Caco-2 (cell line): ENCODE measurements at regions of chr13 and their contacts with region 1.

Region 1: DNA sequence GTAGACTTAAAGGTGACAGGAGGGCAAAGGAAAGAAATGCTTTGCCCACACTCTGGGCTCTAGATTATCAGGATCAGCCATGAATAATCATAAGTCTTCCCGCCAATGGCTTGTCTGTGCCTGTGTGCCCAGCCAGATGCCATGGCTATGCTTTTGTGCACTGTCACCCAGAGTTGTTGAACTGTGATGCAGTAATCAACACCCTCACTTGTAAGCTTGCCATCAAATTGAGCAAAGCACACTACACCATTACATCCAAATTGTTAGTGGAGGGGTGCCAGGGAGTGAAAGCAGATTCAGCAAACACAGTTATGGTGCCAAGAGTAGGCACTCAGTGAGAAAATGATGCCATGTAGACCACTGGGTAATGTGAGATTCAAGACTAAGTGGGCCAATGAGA is 845.3 kb upstream of the MIR17HG start:
- DNase-seq: no peak
- H3K4me3 ChIP-seq: no peak overlapping the region
- H3K4me3 Mint-ChIP-seq: no peak overlapping the region
- H3K27ac Mint-ChIP-seq: peak overlapping the region; percentile 73
- H3K4me1 ChIP-seq: peaks cover 65% of the 10 kb centered on the region
- H3K4me1 Mint-ChIP-seq: peaks cover 50% of the 10 kb centered on the region
- H3K27me3 ChIP-seq: no peaks in the 10 kb centered on the region
- H3K27me3 Mint-ChIP-seq: no peaks in the 10 kb centered on the region
- CTCF ChIP-seq: no peak

Region 2: GRCh38 chr13:90445179-90445578 is 57.0 kb before region 1 on chr13:
- CTCF ChIA-PET with region 1: no interaction called
- POLR2A ChIA-PET with region 1: no interaction called
- intact Hi-C with region 1: loop called (anchors 2 kb)
- DNase-seq: peak; percentile 53 to 55
- H3K4me3 ChIP-seq: no peak overlapping the region
- H3K4me3 Mint-ChIP-seq: no peak overlapping the region
- H3K27ac Mint-ChIP-seq: peak overlapping the region; percentile 85
- H3K4me1 ChIP-seq: peaks cover 38% of the 10 kb centered on the region
- H3K4me1 Mint-ChIP-seq: peaks cover 23% of the 10 kb centered on the region
- H3K27me3 ChIP-seq: no peaks in the 10 kb centered on the region
- H3K27me3 Mint-ChIP-seq: no peaks in the 10 kb centered on the region
- CTCF ChIP-seq: no peak

Region 3: DNA sequence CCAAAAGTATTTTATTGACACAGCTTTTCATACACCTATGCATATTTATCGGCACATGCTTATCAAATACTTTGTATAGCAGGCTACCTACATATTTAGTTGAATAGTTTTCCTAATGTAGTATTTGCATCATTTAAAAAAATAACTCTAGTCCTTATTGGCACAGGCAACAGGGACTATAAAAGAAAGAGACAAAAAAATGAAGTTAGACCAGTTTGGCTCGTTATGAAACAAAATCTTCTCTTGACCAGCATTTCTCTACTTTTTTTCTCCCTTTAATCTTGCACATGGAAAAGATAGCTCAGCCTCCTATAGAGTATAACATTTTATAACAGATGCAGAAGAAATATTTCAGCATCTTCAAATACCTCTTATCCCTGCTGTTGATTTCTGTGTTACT is 50.5 kb after region 1 on chr13:
- CTCF ChIA-PET with region 1: no interaction called
- POLR2A ChIA-PET with region 1: no interaction called
- intact Hi-C with region 1: loop called (anchors 2 kb)
- DNase-seq: peak in 1 of 2 experiments; percentile 19
- H3K4me3 ChIP-seq: no peak overlapping the region
- H3K4me3 Mint-ChIP-seq: peak overlapping the region; percentile 13
- H3K27ac Mint-ChIP-seq: no peak overlapping the region
- H3K4me1 ChIP-seq: 0 out of 2 replicates have a peak, but pooled peaks cover 5% of the 10 kb centered on the region
- H3K4me1 Mint-ChIP-seq: peaks cover 14% of the 10 kb centered on the region
- H3K27me3 ChIP-seq: no peaks in the 10 kb centered on the region
- H3K27me3 Mint-ChIP-seq: no peaks in the 10 kb centered on the region
- CTCF ChIP-seq: no peak

Region 4: GRCh38 chr13:90594694-90595093 is 92.5 kb after region 1 on chr13:
- CTCF ChIA-PET with region 1: no interaction called
- POLR2A ChIA-PET with region 1: no interaction called
- intact Hi-C with region 1: loop called (anchors 5 kb)
- DNase-seq: no peak
- H3K4me3 ChIP-seq: no peak overlapping the region
- H3K4me3 Mint-ChIP-seq: no peak overlapping the region
- H3K27ac Mint-ChIP-seq: no peak overlapping the region
- H3K4me1 ChIP-seq: peaks cover 16% of the 10 kb centered on the region
- H3K4me1 Mint-ChIP-seq: peaks cover 6% of the 10 kb centered on the region
- H3K27me3 ChIP-seq: no peaks in the 10 kb centered on the region
- H3K27me3 Mint-ChIP-seq: peaks cover 3% of the 10 kb centered on the region
- CTCF ChIP-seq: no peak